Activated CD4-positive, alpha-beta T cell treated with anti-CD3 and anti-CD28 coated beads for 36 hours (primary cell): ENCODE measurements at regions of chr21 and their contacts with region 1.

Region 1: GRCh38 chr21:34807146-34807880 is 138.5 kb downstream of the CLIC6 start:
- DNase-seq: peak; percentile 83
- ATAC-seq: peak; percentile 92
- H3K4me3 Mint-ChIP-seq: no peak overlapping the region
- H3K27ac Mint-ChIP-seq: peak overlapping the region; percentile 87
- H3K4me1 Mint-ChIP-seq: peaks cover 90% of the 10 kb centered on the region
- H3K27me3 Mint-ChIP-seq: no peaks in the 10 kb centered on the region

Region 2: GRCh38 chr21:34865928-34866284 is 58.6 kb after region 1 on chr21:
- CTCF ChIA-PET with region 1: no interaction called
- POLR2A ChIA-PET with region 1: interaction called, 6 read pairs
- intact Hi-C with region 1: loop called in 1 of 2 experiments (anchors 1 kb)
- DNase-seq: peak; percentile 69
- ATAC-seq: peak; percentile 91
- H3K4me3 Mint-ChIP-seq: peak overlapping the region; percentile 43
- H3K27ac Mint-ChIP-seq: peak overlapping the region; percentile 76
- H3K4me1 Mint-ChIP-seq: peaks cover 69% of the 10 kb centered on the region
- H3K27me3 Mint-ChIP-seq: no peaks in the 10 kb centered on the region

Region 3: DNA sequence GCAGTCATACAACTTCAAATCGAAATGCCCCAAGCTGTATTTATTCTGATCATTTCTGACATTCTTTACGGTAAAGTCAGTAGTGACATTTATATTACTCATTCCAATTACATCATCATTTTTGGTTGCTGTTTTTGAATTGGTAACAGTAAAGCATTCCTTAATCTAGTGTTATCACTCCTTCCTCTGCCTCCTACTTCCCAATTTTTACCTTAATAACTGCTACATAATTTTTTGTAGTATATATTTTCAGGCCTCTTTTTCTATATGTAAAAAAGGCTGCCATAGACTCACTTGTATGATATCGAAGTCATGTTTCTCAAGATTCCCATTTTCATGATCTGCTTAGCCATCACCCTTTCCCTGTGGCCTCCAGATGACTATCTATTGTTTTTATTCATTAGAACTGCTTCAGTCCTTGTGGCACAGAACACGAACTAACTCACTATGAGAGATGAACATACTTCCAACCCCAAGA is 74.6 kb after region 1 on chr21:
- CTCF ChIA-PET with region 1: interaction called, 4 read pairs
- POLR2A ChIA-PET with region 1: no interaction called
- intact Hi-C with region 1: loop called (anchors 1 to 5 kb)
- DNase-seq: no peak
- ATAC-seq: peak; percentile 70
- H3K4me3 Mint-ChIP-seq: peak overlapping the region; percentile 92
- H3K27ac Mint-ChIP-seq: peak overlapping the region; percentile 91
- H3K4me1 Mint-ChIP-seq: peaks cover 67% of the 10 kb centered on the region
- H3K27me3 Mint-ChIP-seq: no peaks in the 10 kb centered on the region

Region 4: GRCh38 chr21:34933609-34934335 is 126.5 kb after region 1 on chr21:
- CTCF ChIA-PET with region 1: no interaction called
- POLR2A ChIA-PET with region 1: no interaction called
- intact Hi-C with region 1: loop called in 1 of 2 experiments (anchors 5 kb)
- DNase-seq: peak; percentile 40
- ATAC-seq: peak; percentile 85
- H3K4me3 Mint-ChIP-seq: peak overlapping the region; percentile 68
- H3K27ac Mint-ChIP-seq: peak overlapping the region; percentile 96
- H3K4me1 Mint-ChIP-seq: peaks cover 84% of the 10 kb centered on the region
- H3K27me3 Mint-ChIP-seq: no peaks in the 10 kb centered on the region

Region 5: DNA sequence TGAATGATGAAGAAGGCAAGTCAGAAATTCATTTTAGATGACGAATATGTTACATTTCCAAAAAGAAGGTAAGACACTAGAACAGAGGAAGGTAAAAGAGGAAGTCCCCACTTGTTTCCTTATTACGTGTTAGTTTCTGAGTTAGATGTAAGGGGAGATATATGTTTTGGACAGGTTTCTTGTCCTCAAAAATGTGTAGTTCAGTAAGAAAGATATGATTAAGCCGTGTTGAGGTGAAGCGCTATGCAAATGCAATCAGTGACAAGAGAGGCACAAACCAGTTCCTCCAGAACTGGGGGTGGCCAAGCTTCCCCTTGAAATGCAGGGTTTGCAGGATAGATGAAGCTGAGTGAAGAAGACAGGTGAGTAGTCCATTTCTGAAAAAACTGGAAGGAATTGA is 535.1 kb after region 1 on chr21:
- CTCF ChIA-PET with region 1: no interaction called
- POLR2A ChIA-PET with region 1: no interaction called
- intact Hi-C with region 1: loop called in 1 of 2 experiments (anchors 5 kb)
- DNase-seq: peak; percentile 55
- ATAC-seq: peak; percentile 78
- H3K4me3 Mint-ChIP-seq: peak overlapping the region; percentile 59
- H3K27ac Mint-ChIP-seq: peak overlapping the region; percentile 94
- H3K4me1 Mint-ChIP-seq: peaks cover 39% of the 10 kb centered on the region
- H3K27me3 Mint-ChIP-seq: peaks cover 1% of the 10 kb centered on the region